MCF 10A (cell line): ENCODE measurements at regions of chr21 and their contacts with region 1.

Region 1: DNA sequence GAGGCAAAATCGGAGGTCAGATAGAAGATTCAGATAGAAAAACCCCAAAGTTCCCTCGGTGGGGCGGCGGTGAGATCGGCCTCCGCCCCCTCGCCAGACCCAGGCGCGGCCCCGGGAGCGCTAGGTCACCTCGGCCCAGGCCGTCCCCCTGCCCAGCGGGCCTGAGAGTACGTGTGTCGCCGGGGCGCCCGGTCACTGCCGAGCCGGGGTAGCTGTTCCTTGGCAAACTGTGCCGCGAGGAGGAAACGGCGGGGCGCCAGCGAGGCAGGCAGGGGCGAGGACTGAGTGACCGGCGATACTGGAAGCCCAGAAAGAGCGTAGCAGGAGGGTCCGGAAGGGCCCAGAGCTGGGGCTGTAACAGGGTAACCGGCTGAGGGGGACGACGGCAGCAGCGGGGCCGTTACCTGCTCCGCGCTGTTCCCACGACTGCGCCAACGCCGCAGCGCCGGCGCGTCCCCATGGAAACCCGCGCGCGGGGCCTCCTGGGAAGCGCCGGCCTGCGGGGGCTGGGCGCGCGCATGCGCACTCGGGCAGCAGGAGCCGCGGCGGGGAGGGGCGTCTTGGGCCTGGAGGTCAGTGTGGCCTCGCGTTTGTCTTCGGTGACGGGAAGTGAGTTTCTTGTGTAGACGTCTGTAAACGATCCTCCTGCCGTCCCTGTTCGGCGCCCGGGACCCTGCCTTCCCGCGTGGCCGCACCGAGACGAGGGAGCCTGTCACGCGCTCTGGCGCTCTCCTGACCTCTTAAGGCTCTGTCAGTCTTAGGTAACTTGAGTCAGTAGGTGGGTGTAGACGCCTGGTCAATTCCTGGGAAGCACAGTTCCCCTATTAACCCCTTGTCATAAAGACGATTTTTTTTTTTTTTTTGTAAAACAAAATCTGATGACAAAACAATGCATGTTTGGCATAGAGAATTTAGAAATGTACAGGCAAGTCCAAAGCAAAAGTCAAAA is at the start of gene LCA5L:
- DNase-seq: peak; percentile 87
- H3K4me3 Mint-ChIP-seq: peak within 1 kb of the TSS; percentile 89
- H3K27ac Mint-ChIP-seq: peak within 1 kb of the TSS; percentile 96
- H3K4me1 Mint-ChIP-seq: peaks cover 9% of the 10 kb centered on the region
- H3K27me3 Mint-ChIP-seq: no peaks in the 10 kb centered on the region
- CTCF ChIP-seq: no peak
- total RNA-seq, gene LCA5L: 2.8 and 4.3 TPM in 2 replicates

Region 2: GRCh38 chr21:39313571-39314142 is 131.9 kb before region 1 on chr21 and contains the start of gene BRWD1:
- CTCF ChIA-PET with region 1: interaction called, 5 read pairs
- POLR2A ChIA-PET with region 1: interaction called, 10 read pairs
- intact Hi-C with region 1: no loop called
- DNase-seq: peak; percentile 78
- H3K4me3 Mint-ChIP-seq: peak within 1 kb of the TSS; percentile 76
- H3K27ac Mint-ChIP-seq: peak within 1 kb of the TSS; percentile 94
- H3K4me1 Mint-ChIP-seq: peaks cover 20% of the 10 kb centered on the region
- H3K27me3 Mint-ChIP-seq: no peaks in the 10 kb centered on the region
- CTCF ChIP-seq: no peak
- total RNA-seq, gene BRWD1: 36.0 and 45.4 TPM in 2 replicates

Region 3: GRCh38 chr21:39388038-39388810 is 57.4 kb before region 1 on chr21:
- CTCF ChIA-PET with region 1: interaction called, 12 read pairs
- POLR2A ChIA-PET with region 1: interaction called, 5 read pairs
- intact Hi-C with region 1: loop called (anchors 5 kb)
- DNase-seq: peak; percentile 88
- H3K4me3 Mint-ChIP-seq: peak overlapping the region; percentile 68
- H3K27ac Mint-ChIP-seq: peak overlapping the region; percentile 31
- H3K4me1 Mint-ChIP-seq: peaks cover 10% of the 10 kb centered on the region
- H3K27me3 Mint-ChIP-seq: no peaks in the 10 kb centered on the region
- CTCF ChIP-seq: peak; percentile 85

Region 4: GRCh38 chr21:39422527-39423241 is 22.9 kb before region 1 on chr21:
- CTCF ChIA-PET with region 1: interaction called, 59 read pairs
- POLR2A ChIA-PET with region 1: interaction called, 4 read pairs
- intact Hi-C with region 1: no loop called
- DNase-seq: no peak
- H3K4me3 Mint-ChIP-seq: no peak overlapping the region
- H3K27ac Mint-ChIP-seq: no peak overlapping the region
- H3K4me1 Mint-ChIP-seq: no peaks in the 10 kb centered on the region
- H3K27me3 Mint-ChIP-seq: no peaks in the 10 kb centered on the region
- CTCF ChIP-seq: no peak

Region 5: GRCh38 chr21:39633770-39634181 is 188.2 kb after region 1 on chr21:
- CTCF ChIA-PET with region 1: no interaction called
- POLR2A ChIA-PET with region 1: no interaction called
- intact Hi-C with region 1: no loop called
- DNase-seq: peak; percentile 51
- H3K4me3 Mint-ChIP-seq: peak overlapping the region; percentile 17
- H3K27ac Mint-ChIP-seq: peak overlapping the region; percentile 80
- H3K4me1 Mint-ChIP-seq: peaks cover 43% of the 10 kb centered on the region
- H3K27me3 Mint-ChIP-seq: no peaks in the 10 kb centered on the region
- CTCF ChIP-seq: no peak